CD4-positive, alpha-beta memory T cell (primary cell): ENCODE measurements at regions of chr11 and their contacts with region 1.

Region 1: DNA sequence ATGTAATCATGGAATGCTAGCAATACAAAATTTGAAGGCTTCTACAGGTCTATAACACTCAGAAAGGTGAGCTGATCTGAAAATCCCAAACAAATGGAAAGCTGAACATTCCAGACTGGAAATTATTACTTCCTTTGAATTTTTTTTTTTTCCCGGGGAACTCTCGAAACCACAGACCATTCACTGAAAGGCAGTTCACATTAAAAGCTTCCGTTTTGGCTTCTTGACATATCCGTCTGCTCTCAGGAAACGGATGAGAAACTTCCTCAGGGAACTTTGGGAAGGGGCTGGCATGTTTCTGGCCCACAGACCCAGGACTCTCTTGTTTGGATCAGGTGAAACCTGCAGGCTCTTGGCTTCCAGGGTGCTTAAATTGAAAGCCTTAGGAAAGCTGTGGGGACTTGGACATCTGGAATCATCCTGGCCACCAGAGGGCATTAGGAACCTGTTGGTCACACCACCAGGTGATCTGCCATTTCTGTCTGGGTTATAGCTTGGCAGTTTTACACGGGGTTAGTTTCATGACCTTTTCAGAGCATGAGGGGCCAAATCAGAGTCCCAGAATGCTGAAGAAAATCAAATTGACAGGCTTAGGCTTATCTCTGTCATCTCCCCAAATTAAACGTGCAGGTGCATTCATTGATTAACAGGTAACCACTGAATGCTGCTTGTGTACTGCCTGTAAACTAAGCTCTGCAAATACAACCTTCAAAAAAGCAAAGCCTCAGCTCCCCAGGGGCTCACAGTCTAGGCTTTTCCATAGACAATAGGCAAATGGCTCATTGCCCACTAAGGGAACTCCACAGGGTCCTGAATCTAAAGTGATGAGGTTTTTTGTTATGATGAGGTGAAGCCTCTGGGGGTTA is 22.7 kb upstream of the GRAMD1B start:
- DNase-seq: peak; percentile 60 to 72 (median 68)
- H3K4me3 ChIP-seq: no peak overlapping the region
- H3K4me3 Mint-ChIP-seq: peak overlapping the region in 1 of 8 donors; percentile 60
- H3K27ac ChIP-seq: no peak overlapping the region
- H3K27ac Mint-ChIP-seq: peak overlapping the region in 1 of 7 donors; percentile 43
- H3K4me1 ChIP-seq: no peaks in the 10 kb centered on the region
- H3K4me1 Mint-ChIP-seq: peaks cover 0 to 3% (median 0%) of the 10 kb centered on the region in 4 donors
- H3K27me3 ChIP-seq: no peaks in the 10 kb centered on the region
- H3K27me3 Mint-ChIP-seq: peaks cover 2 to 8% of the 10 kb centered on the region in 2 donors

Region 2: DNA sequence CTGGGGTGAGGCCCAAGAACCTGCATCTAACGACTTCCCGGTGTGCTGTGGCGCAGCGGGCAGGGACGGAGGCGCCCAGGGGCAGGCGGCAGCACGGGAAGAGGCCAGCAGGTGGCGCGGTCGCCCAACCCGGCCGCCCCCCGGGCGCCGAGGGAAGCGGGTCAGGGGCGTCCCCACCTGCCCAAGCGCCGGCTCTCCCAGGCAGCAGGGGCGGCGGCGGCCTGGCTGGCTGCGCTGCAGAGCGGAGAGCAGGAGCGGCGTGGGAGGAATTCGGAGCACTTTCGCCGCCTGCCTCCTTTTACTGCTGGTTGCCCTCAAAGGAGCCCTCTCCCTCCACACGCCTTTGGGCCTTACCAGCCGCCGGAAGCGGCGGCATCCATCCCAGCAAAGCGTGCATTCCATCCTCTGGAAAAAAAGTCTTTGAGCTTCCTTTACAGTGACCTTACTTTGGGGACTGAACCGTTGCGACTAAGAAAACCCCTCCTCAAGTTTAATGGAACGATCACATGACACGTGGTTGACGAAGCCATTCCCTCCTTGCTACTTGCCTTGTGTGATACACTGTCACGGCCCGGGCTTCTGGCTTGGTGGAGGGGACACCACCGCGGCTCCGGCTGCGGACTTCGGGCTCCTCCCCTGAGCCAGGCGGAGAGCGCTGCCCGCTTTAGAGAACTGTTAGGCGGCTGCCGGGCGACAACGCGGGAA is 105.5 kb before region 1 on chr11:
- CTCF ChIA-PET with region 1: interaction called, 32 read pairs
- POLR2A ChIA-PET with region 1: interaction called, 3 read pairs
- intact Hi-C with region 1: loop called (anchors 1 kb)
- DNase-seq: peak; percentile 58 to 72 (median 64)
- H3K4me3 ChIP-seq: peak overlapping the region; percentile 38 to 42
- H3K4me3 Mint-ChIP-seq: peak overlapping the region; percentile 72 to 84 (median 76)
- H3K27ac ChIP-seq: peak overlapping the region; percentile 51
- H3K27ac Mint-ChIP-seq: peak overlapping the region; percentile 75 to 89 (median 83)
- H3K4me1 ChIP-seq: peaks cover 46% of the 10 kb centered on the region
- H3K4me1 Mint-ChIP-seq: peaks cover 27 to 47% (median 37%) of the 10 kb centered on the region in 4 donors
- H3K27me3 ChIP-seq: no peaks in the 10 kb centered on the region
- H3K27me3 Mint-ChIP-seq: no peaks in the 10 kb centered on the region

Region 3: GRCh38 chr11:123325533-123325932 is 81.8 kb before region 1 on chr11:
- CTCF ChIA-PET with region 1: no interaction called
- POLR2A ChIA-PET with region 1: no interaction called
- intact Hi-C with region 1: no loop called
- DNase-seq: no peak
- H3K4me3 ChIP-seq: no peak overlapping the region
- H3K4me3 Mint-ChIP-seq: no peak overlapping the region
- H3K27ac ChIP-seq: no peak overlapping the region
- H3K27ac Mint-ChIP-seq: no peak overlapping the region
- H3K4me1 ChIP-seq: no peaks in the 10 kb centered on the region
- H3K4me1 Mint-ChIP-seq: no peaks in the 10 kb centered on the region
- H3K27me3 ChIP-seq: no peaks in the 10 kb centered on the region
- H3K27me3 Mint-ChIP-seq: peaks cover 3% of the 10 kb centered on the region in 2 donors

Region 4: GRCh38 chr11:123351375-123351774 is 56.0 kb before region 1 on chr11:
- CTCF ChIA-PET with region 1: no interaction called
- POLR2A ChIA-PET with region 1: no interaction called
- intact Hi-C with region 1: no loop called
- DNase-seq: no peak
- H3K4me3 ChIP-seq: no peak overlapping the region
- H3K4me3 Mint-ChIP-seq: no peak overlapping the region
- H3K27ac ChIP-seq: no peak overlapping the region
- H3K27ac Mint-ChIP-seq: no peak overlapping the region
- H3K4me1 ChIP-seq: no peaks in the 10 kb centered on the region
- H3K4me1 Mint-ChIP-seq: peaks cover 0 to 1% (median 0%) of the 10 kb centered on the region in 4 donors
- H3K27me3 ChIP-seq: no peaks in the 10 kb centered on the region
- H3K27me3 Mint-ChIP-seq: peaks cover 6 to 14% of the 10 kb centered on the region in 2 donors

Region 5: DNA sequence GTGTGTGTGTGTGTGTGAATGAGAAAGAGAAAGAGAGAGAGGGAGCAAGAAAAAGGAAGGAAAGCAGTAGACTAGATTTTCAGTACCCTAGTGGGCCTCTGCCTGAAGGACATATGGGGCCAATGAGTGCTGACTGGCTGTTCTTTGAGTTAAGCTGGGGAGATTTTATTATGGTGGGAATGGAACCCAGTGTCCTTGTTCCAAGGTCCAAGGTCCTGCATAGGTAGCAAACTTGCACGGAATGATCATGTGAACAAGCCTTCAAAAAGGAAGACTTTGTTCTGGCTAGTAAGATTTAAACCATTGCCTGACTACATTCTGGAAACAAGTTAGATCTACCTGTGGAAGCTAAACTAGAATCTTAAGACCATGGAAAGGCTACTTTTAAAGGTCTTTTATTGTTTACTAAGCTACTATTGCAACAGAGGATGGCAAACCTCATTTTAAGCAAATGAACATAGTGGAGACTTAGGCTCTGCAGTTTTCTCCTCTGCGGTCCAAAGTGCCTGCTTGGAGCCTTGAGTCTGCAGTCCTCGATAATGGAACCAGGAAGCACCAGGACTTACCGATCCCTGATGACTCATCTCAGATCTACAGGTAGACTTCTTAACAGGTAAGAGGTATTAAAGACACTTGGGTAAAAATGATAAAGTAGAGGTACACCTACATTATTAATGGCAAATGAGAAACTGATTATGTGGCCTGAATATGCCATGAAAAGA is 12.5 kb after region 1 on chr11:
- CTCF ChIA-PET with region 1: interaction called, 50 read pairs
- POLR2A ChIA-PET with region 1: no interaction called
- intact Hi-C with region 1: no loop called
- DNase-seq: no peak
- H3K4me3 ChIP-seq: no peak overlapping the region
- H3K4me3 Mint-ChIP-seq: no peak overlapping the region
- H3K27ac ChIP-seq: no peak overlapping the region
- H3K27ac Mint-ChIP-seq: no peak overlapping the region
- H3K4me1 ChIP-seq: no peaks in the 10 kb centered on the region
- H3K4me1 Mint-ChIP-seq: no peaks in the 10 kb centered on the region
- H3K27me3 ChIP-seq: no peaks in the 10 kb centered on the region
- H3K27me3 Mint-ChIP-seq: peaks cover 4 to 10% of the 10 kb centered on the region in 2 donors

Region 6: GRCh38 chr11:123469089-123469488 is 61.7 kb after region 1 on chr11:
- CTCF ChIA-PET with region 1: interaction called, 433 read pairs
- POLR2A ChIA-PET with region 1: no interaction called
- intact Hi-C with region 1: no loop called
- DNase-seq: no peak
- H3K4me3 ChIP-seq: no peak overlapping the region
- H3K4me3 Mint-ChIP-seq: no peak overlapping the region
- H3K27ac ChIP-seq: no peak overlapping the region
- H3K27ac Mint-ChIP-seq: peak overlapping the region in 1 of 7 donors; percentile 43
- H3K4me1 ChIP-seq: no peaks in the 10 kb centered on the region
- H3K4me1 Mint-ChIP-seq: peaks cover 0 to 21% (median 8%) of the 10 kb centered on the region in 4 donors
- H3K27me3 ChIP-seq: no peaks in the 10 kb centered on the region
- H3K27me3 Mint-ChIP-seq: no peaks in the 10 kb centered on the region

Region 7: GRCh38 chr11:123484448-123484847 is 77.1 kb after region 1 on chr11:
- CTCF ChIA-PET with region 1: interaction called, 433 read pairs
- POLR2A ChIA-PET with region 1: interaction called, 20 read pairs
- intact Hi-C with region 1: no loop called
- DNase-seq: no peak
- H3K4me3 ChIP-seq: no peak overlapping the region
- H3K4me3 Mint-ChIP-seq: no peak overlapping the region
- H3K27ac ChIP-seq: no peak overlapping the region
- H3K27ac Mint-ChIP-seq: no peak overlapping the region
- H3K4me1 ChIP-seq: no peaks in the 10 kb centered on the region
- H3K4me1 Mint-ChIP-seq: peaks cover 0 to 7% (median under 1%) of the 10 kb centered on the region in 4 donors
- H3K27me3 ChIP-seq: no peaks in the 10 kb centered on the region
- H3K27me3 Mint-ChIP-seq: no peaks in the 10 kb centered on the region

Region 8: GRCh38 chr11:123672568-123672967 is 265.2 kb after region 1 on chr11:
- CTCF ChIA-PET with region 1: no interaction called
- POLR2A ChIA-PET with region 1: no interaction called
- intact Hi-C with region 1: no loop called
- DNase-seq: no peak
- H3K4me3 ChIP-seq: no peak overlapping the region
- H3K4me3 Mint-ChIP-seq: no peak overlapping the region
- H3K27ac ChIP-seq: no peak overlapping the region
- H3K27ac Mint-ChIP-seq: no peak overlapping the region
- H3K4me1 ChIP-seq: no peaks in the 10 kb centered on the region
- H3K4me1 Mint-ChIP-seq: no peaks in the 10 kb centered on the region
- H3K27me3 ChIP-seq: no peaks in the 10 kb centered on the region
- H3K27me3 Mint-ChIP-seq: peaks cover 9 to 16% of the 10 kb centered on the region in 2 donors